ENCODE measurements at regions of chr1 and their contacts with region 1.

Region 1: GRCh38 chr1:11838349-11839272 is 9.0 kb downstream of the NPPA start:
- DNase-seq: peak; percentile 93
- H3K4me3 ChIP-seq: peak overlapping the region in 1 of 2 experiments; percentile 36; a peak in 1 of 4 replicates
- H3K27ac ChIP-seq: no peak overlapping the region; a peak in 1 of 4 replicates
- H3K4me1 ChIP-seq: peaks cover 0 to 26% of the 10 kb centered on the region in 2 experiments; a peak in 2 of 4 replicates
- H3K27me3 ChIP-seq: no peaks in the 10 kb centered on the region
- CTCF ChIP-seq: peak; percentile 97
- EP300 ChIP-seq: no peak
- RAD21 ChIP-seq: peak; percentile 99

Region 2: GRCh38 chr1:11822096-11822495 is 16.5 kb before region 1 on chr1:
- CTCF ChIA-PET with region 1: interaction called, 29 read pairs
- POLR2A ChIA-PET with region 1: no interaction called
- DNase-seq: no peak
- H3K4me3 ChIP-seq: no peak overlapping the region
- H3K27ac ChIP-seq: peak overlapping the region; percentile 12 to 35; a peak in 1 of 4 replicates
- H3K4me1 ChIP-seq: no peaks in the 10 kb centered on the region
- H3K27me3 ChIP-seq: no peaks in the 10 kb centered on the region
- CTCF ChIP-seq: no peak
- EP300 ChIP-seq: no peak
- RAD21 ChIP-seq: no peak

Region 3: DNA sequence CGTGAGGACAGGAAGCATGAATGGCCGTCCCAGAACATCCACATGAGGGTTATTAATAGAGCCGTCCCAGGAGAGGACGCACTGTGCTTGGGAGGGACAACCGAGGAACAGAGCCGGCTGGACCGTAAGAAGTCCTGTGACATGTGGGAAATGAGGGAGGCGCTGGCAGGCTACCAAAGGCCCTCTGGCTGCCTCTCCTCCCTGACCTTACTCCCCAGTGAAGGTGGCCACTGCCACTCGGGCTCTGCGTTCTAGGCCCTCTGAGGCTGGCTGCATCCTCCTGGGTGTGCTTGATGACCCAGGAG is 35.6 kb after region 1 on chr1:
- CTCF ChIA-PET with region 1: interaction called, 42 read pairs
- POLR2A ChIA-PET with region 1: interaction called, 3 read pairs
- DNase-seq: no peak
- H3K4me3 ChIP-seq: no peak overlapping the region
- H3K27ac ChIP-seq: no peak overlapping the region; a peak in 1 of 4 replicates
- H3K4me1 ChIP-seq: peaks cover 0 to 33% of the 10 kb centered on the region in 2 experiments; a peak in 1 of 4 replicates
- H3K27me3 ChIP-seq: 0 out of 2 replicates have a peak, but pooled peaks cover 12% of the 10 kb centered on the region
- CTCF ChIP-seq: no peak
- EP300 ChIP-seq: no peak
- RAD21 ChIP-seq: no peak

Region 4: GRCh38 chr1:11893907-11894251 is 55.3 kb after region 1 on chr1:
- CTCF ChIA-PET with region 1: interaction called, 316 read pairs
- POLR2A ChIA-PET with region 1: interaction called, 3 read pairs
- DNase-seq: peak; percentile 90
- H3K4me3 ChIP-seq: peak overlapping the region in 1 of 2 experiments; percentile 39; a peak in 1 of 4 replicates
- H3K27ac ChIP-seq: no peak overlapping the region
- H3K4me1 ChIP-seq: peaks cover 0 to 5% of the 10 kb centered on the region in 2 experiments; a peak in 1 of 4 replicates
- H3K27me3 ChIP-seq: 0 out of 2 replicates have a peak, but pooled peaks cover 6% of the 10 kb centered on the region
- CTCF ChIP-seq: peak; percentile 93
- EP300 ChIP-seq: no peak
- RAD21 ChIP-seq: peak; percentile 93

Region 5: DNA sequence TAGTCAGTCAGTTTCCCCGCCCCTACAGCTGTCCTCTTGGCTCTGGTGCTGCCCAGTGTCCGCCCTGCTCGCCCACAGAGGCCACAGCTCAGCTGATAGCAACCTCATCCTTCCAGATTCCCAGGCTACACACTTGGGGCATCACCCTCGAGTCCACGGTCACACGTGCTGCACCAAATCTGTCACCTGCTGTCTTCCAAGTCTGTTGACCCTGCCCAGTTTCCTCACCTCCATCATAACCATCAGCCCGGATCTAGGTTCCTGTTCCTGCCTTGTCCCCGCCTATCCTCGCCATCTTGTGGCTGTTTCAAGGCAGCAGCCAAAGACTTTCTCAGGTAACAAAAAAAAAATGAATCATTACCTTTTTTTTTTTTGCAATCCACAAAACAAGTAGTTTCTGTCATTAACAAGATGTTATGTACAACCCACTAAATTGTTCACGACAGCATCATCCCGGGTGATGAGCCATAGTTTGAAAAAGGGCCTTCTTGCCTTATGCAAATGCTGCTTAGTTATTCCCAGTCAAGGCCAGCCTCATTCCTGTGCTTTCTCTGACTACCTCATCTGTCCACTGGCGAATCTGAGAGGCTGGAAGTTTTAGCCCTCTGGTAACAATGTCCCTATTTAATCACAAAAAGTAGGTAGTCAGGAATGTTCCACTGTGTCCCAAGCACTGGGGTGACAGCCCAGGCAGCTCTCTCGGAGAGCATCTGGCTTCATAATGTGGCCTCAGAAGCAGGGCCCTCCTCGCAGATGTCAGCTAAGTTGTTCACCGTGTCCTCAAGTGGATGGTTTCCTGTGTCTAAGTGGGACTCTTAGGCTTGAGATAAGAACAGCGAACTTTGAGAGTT is 175.8 kb after region 1 on chr1:
- CTCF ChIA-PET with region 1: no interaction called
- POLR2A ChIA-PET with region 1: no interaction called
- DNase-seq: no peak
- H3K4me3 ChIP-seq: no peak overlapping the region
- H3K27ac ChIP-seq: peak overlapping the region in 1 of 2 experiments; percentile 72; a peak in 2 of 4 replicates
- H3K4me1 ChIP-seq: peaks cover 0 to 9% of the 10 kb centered on the region in 2 experiments; a peak in 2 of 4 replicates
- H3K27me3 ChIP-seq: no peaks in the 10 kb centered on the region
- CTCF ChIP-seq: peak; percentile 31
- EP300 ChIP-seq: no peak
- RAD21 ChIP-seq: no peak

Measured in SK-N-SH (cell line).